ENCODE measurements at regions of chr17 and their contacts with region 1.

Region 1: GRCh38 chr17:82668631-82669099 is 20.4 kb upstream of the WDR45B start:
- DNase-seq: peak; percentile 84 to 88 (median 87)
- H3K4me3 ChIP-seq: peak overlapping the region in 6 of 7 experiments; percentile 23 to 67 (median 48)
- H3K27ac ChIP-seq: no peak overlapping the region
- H3K4me1 ChIP-seq: peaks cover 0 to 19% (median 6%) of the 10 kb centered on the region in 4 experiments
- H3K27me3 ChIP-seq: no peaks in the 10 kb centered on the region

Region 2: GRCh38 chr17:82649501-82650261 is 19.0 kb before region 1 on chr17:
- CTCF ChIA-PET with region 1: interaction called, 10 read pairs
- POLR2A ChIA-PET with region 1: no interaction called
- DNase-seq: no peak
- H3K4me3 ChIP-seq: no peak overlapping the region
- H3K27ac ChIP-seq: no peak overlapping the region
- H3K4me1 ChIP-seq: peaks cover 4 to 26% (median 23%) of the 10 kb centered on the region in 4 experiments
- H3K27me3 ChIP-seq: no peaks in the 10 kb centered on the region

Region 3: DNA sequence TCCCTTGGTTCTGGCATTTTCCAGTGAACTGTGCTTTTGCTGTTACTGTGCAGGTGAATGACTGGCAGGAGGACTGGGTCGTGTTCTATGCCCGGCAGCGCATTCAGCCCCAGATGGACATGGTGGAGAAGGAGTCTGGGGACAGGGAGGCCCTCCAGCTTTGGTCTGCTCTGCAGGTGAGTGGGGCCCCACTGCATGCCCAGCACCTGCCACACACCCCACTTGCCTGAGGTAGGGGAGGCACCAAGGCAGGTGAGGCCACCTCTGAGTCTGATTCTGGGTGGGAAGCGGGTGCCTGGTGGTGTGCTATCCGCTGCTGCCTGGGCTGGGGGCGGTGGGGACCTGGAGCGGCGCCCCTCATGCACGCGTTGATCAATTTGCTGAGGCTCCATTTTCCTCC is 57.8 kb after region 1 on chr17:
- CTCF ChIA-PET with region 1: no interaction called
- POLR2A ChIA-PET with region 1: no interaction called
- DNase-seq: no peak
- H3K4me3 ChIP-seq: no peak overlapping the region
- H3K27ac ChIP-seq: no peak overlapping the region
- H3K4me1 ChIP-seq: no peaks in the 10 kb centered on the region
- H3K27me3 ChIP-seq: no peaks in the 10 kb centered on the region

Region 4: DNA sequence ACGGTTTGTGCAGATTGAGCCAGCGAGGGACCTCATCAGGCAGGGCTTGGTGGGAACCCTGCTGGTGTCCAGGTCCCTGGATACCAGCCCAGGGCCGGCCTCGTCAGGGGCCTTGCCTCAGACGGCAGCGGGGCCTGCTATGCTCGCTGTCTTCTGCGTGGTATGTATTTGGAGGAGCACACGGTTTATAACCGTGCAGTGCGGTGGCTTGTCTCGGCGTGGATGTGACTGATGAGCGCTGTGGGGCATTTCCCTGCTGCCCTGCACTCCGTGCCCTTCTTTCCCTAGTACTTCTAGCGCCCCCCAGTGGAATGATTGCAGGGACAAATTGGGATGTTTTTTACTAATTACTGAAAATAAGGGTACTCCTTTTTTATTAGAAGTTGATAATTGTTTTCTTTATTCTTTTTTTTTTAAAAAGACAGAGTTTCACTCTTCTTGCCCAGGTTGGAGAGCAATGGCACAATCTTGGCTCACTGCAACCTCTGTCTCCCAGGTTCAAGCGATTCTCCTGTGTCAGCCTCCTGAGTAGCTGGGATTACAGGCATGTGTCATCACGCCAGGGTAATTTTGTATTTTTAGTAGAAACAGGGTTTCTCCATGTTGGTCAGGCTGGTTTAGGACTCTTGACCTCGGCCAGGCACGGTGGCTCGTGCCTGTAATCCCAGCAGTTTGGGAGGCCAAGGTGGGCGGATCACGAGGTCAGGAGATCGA is 98.5 kb after region 1 on chr17:
- CTCF ChIA-PET with region 1: interaction called, 29 read pairs
- POLR2A ChIA-PET with region 1: no interaction called
- DNase-seq: peak; percentile 58 to 74 (median 70)
- H3K4me3 ChIP-seq: no peak overlapping the region
- H3K27ac ChIP-seq: no peak overlapping the region
- H3K4me1 ChIP-seq: no peaks in the 10 kb centered on the region
- H3K27me3 ChIP-seq: no peaks in the 10 kb centered on the region

Region 5: GRCh38 chr17:83067221-83068048 is 398.8 kb after region 1 on chr17:
- CTCF ChIA-PET with region 1: no interaction called
- POLR2A ChIA-PET with region 1: no interaction called
- DNase-seq: no peak
- H3K4me3 ChIP-seq: no peak overlapping the region
- H3K27ac ChIP-seq: no peak overlapping the region
- H3K4me1 ChIP-seq: peaks cover 0 to 55% (median 50%) of the 10 kb centered on the region in 4 experiments
- H3K27me3 ChIP-seq: no peaks in the 10 kb centered on the region